ENCODE measurements at regions of chr2 and their contacts with region 1.

Region 1: GRCh38 chr2:236593956-236594355 is 24.3 kb downstream of the ACKR3 start:
- DNase-seq: no peak
- H3K4me3 ChIP-seq: no peak overlapping the region
- H3K27ac ChIP-seq: no peak overlapping the region
- H3K4me1 ChIP-seq: no peaks in the 10 kb centered on the region
- H3K27me3 ChIP-seq: no peaks in the 10 kb centered on the region
- CTCF ChIP-seq: no peak
- EP300 ChIP-seq: no peak
- POLR2A ChIP-seq: no peak

Region 2: DNA sequence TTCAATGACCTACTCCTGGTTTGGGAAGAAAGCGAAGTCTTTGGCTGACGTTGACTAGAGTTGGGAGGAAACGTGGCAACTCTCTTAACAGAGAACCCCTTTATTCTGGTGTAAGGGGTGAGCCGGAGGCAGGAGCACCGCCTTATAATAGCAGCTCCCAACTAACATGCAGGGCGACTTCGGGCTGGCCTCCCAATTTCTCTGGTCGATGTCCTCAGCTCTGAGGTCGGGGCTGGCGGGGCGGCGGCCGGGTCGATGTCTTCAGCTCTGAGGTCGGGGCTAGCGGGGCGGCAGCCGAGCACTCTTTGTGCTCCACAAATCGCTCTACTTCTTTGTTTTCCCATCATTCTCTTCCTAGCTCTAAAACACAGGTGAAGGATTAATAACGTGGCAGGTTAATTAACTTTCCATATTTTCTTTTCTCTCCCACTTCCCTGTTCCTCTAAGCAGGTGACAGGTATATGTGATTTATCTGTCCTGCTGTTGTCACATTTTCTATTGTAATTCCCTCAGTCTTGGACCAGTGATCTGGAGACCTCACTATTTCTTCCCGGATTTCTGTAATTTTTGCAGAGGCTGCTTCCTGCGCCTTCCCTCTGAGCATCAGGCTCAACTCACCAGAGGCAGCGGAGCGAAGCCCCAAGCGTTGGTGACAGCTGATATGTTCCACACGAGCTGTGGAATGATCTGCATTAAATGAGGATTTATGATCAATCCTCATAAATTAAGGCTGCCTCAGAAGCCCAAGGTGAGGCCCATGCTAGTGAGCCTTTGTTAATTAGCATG is 40.0 kb after region 1 on chr2:
- in situ Hi-C with region 1: no loop called
- intact Hi-C with region 1: loop called (anchors 1 kb)
- DNase-seq: no peak
- H3K4me3 ChIP-seq: no peak overlapping the region
- H3K27ac ChIP-seq: no peak overlapping the region
- H3K4me1 ChIP-seq: peaks cover 0 to 7% (median 2%) of the 10 kb centered on the region in 4 donors
- H3K27me3 ChIP-seq: no peaks in the 10 kb centered on the region
- CTCF ChIP-seq: no peak
- EP300 ChIP-seq: no peak
- POLR2A ChIP-seq: no peak

Region 3: GRCh38 chr2:236644502-236644911 is 50.6 kb after region 1 on chr2:
- in situ Hi-C with region 1: no loop called
- intact Hi-C with region 1: no loop called
- DNase-seq: no peak
- H3K4me3 ChIP-seq: no peak overlapping the region
- H3K27ac ChIP-seq: no peak overlapping the region
- H3K4me1 ChIP-seq: peaks cover 0 to 5% (median 0%) of the 10 kb centered on the region in 4 donors
- H3K27me3 ChIP-seq: no peaks in the 10 kb centered on the region
- CTCF ChIP-seq: no peak
- EP300 ChIP-seq: no peak
- POLR2A ChIP-seq: no peak

Region 4: GRCh38 chr2:238299803-238300202 is 1705.8 kb after region 1 on chr2:
- in situ Hi-C with region 1: no loop called
- intact Hi-C with region 1: no loop called
- DNase-seq: peak; percentile 59
- H3K4me3 ChIP-seq: no peak overlapping the region
- H3K27ac ChIP-seq: peak overlapping the region; percentile 64 to 80 (median 66)
- H3K4me1 ChIP-seq: peaks cover 5 to 27% (median 21%) of the 10 kb centered on the region in 4 donors
- H3K27me3 ChIP-seq: no peaks in the 10 kb centered on the region
- CTCF ChIP-seq: peak in 1 of 5 experiments; percentile 25
- EP300 ChIP-seq: no peak
- POLR2A ChIP-seq: no peak

Measured in transverse colon (tissue), 4 donors.